ENCODE measurements at regions of chr12 and their contacts with region 1.

Region 1: GRCh38 chr12:117640511-117640910 is 279.1 kb upstream of the NOS1 start:
- DNase-seq: no peak
- H3K4me3 ChIP-seq: no peak overlapping the region
- H3K27ac ChIP-seq: no peak overlapping the region
- H3K4me1 ChIP-seq: no peaks in the 10 kb centered on the region
- H3K27me3 ChIP-seq: no peaks in the 10 kb centered on the region
- CTCF ChIP-seq: no peak
- POLR2A ChIP-seq: no peak

Region 2: GRCh38 chr12:117430246-117430645 is 210.3 kb before region 1 on chr12:
- intact Hi-C with region 1: no loop called
- DNase-seq: no peak
- H3K4me3 ChIP-seq: no peak overlapping the region
- H3K27ac ChIP-seq: no peak overlapping the region
- H3K4me1 ChIP-seq: no peaks in the 10 kb centered on the region
- H3K27me3 ChIP-seq: no peaks in the 10 kb centered on the region
- CTCF ChIP-seq: no peak
- POLR2A ChIP-seq: no peak

Region 3: DNA sequence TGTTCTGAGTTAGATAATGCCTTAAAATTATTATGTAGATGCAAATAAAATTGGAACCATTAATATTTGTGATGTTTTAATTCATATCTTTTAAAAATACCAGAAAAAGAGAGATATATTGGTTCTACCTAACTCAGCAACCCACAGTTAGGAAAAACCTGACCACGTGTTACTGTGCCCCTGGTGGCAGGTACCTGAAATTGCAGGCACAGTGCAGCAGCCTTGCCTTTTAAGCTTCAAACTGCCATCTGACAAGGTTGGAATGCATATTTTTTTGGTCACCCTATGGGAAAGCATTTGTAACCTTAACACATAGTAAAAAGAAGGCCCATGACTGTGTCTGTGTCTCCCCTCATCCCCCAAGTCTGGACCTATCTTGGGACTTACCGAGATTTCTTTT is 169.7 kb before region 1 on chr12:
- intact Hi-C with region 1: no loop called
- DNase-seq: no peak
- H3K4me3 ChIP-seq: no peak overlapping the region
- H3K27ac ChIP-seq: no peak overlapping the region
- H3K4me1 ChIP-seq: no peaks in the 10 kb centered on the region
- H3K27me3 ChIP-seq: no peaks in the 10 kb centered on the region
- CTCF ChIP-seq: no peak
- POLR2A ChIP-seq: no peak

Region 4: GRCh38 chr12:117679776-117680175 is 39.3 kb after region 1 on chr12:
- intact Hi-C with region 1: loop called (anchors 2 kb)
- DNase-seq: no peak
- H3K4me3 ChIP-seq: no peak overlapping the region
- H3K27ac ChIP-seq: no peak overlapping the region
- H3K4me1 ChIP-seq: no peaks in the 10 kb centered on the region
- H3K27me3 ChIP-seq: no peaks in the 10 kb centered on the region
- CTCF ChIP-seq: no peak
- POLR2A ChIP-seq: no peak